Breast epithelium (tissue), 4 donors: ENCODE measurements at regions of chr2 and their contacts with region 1.

Region 1: GRCh38 chr2:179141206-179141605 is 91.3 kb upstream of the CCDC141 start:
- DNase-seq: no peak
- H3K4me3 ChIP-seq: no peak overlapping the region
- H3K27ac ChIP-seq: no peak overlapping the region
- H3K4me1 ChIP-seq: no peaks in the 10 kb centered on the region
- H3K27me3 ChIP-seq: no peaks in the 10 kb centered on the region
- CTCF ChIP-seq: no peak
- POLR2A ChIP-seq: no peak

Region 2: GRCh38 chr2:179017773-179018357 is 123.3 kb before region 1 on chr2:
- intact Hi-C with region 1: loop called (anchors 5 kb)
- DNase-seq: no peak
- H3K4me3 ChIP-seq: no peak overlapping the region
- H3K27ac ChIP-seq: no peak overlapping the region
- H3K4me1 ChIP-seq: no peaks in the 10 kb centered on the region
- H3K27me3 ChIP-seq: no peaks in the 10 kb centered on the region
- CTCF ChIP-seq: no peak
- POLR2A ChIP-seq: no peak

Region 3: GRCh38 chr2:179701524-179702110 is 560.4 kb after region 1 on chr2:
- intact Hi-C with region 1: no loop called
- DNase-seq: no peak
- H3K4me3 ChIP-seq: no peak overlapping the region
- H3K27ac ChIP-seq: no peak overlapping the region
- H3K4me1 ChIP-seq: no peaks in the 10 kb centered on the region
- H3K27me3 ChIP-seq: no peaks in the 10 kb centered on the region
- CTCF ChIP-seq: no peak
- POLR2A ChIP-seq: no peak